ENCODE measurements at regions of chr11 and their contacts with region 1.

Region 1: DNA sequence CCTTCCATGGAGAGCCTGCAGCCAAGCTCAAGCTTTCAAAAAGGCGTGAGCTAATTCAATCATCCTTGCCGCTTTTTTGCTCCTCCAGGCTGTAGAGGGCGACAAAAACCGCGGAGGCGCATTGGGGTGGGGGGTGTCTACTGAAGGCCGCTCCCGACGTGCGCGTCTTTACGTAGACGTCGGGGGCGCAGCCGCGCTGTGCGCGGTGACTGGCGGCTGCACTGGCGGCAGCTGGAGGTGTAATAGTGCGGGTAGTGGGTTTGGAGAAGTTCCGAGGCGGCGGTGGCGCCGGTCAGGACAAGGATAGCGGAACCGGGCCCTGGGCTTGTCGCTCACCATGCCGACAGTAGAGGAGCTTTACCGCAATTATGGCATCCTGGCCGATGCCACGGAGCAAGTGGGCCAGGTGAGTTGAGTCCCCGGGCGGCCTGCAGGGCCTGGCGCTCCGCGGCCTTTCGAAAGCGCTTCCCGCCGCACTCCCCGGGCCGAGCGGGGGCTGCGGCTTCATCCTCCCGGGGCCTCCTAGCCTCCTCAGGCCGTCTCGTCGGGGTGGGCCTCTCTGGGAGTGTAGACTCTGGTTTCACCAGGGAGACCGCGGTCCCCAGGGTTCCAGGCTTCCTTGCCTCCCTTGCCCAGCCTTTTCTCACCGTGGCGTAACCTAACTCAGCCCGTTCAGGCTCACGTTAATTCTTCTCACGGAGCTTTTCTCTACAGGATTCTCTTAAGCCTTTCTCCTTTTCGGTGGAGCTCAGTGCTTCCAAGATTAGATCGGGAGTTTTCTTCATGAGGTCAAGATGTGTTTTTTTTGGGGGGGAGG is at the start of gene API5:
- DNase-seq: peak; percentile 79 to 91
- ATAC-seq: peak; percentile 96 to 98
- H3K4me3 ChIP-seq: peak within 1 kb of the TSS; percentile 82 to 94 (median 92)
- H3K27ac ChIP-seq: peak within 1 kb of the TSS; percentile 85 to 89 (median 88)
- H3K4me1 ChIP-seq: peaks cover 22 to 28% of the 10 kb centered on the region in 2 donors
- H3K27me3 ChIP-seq: no peaks in the 10 kb centered on the region
- CTCF ChIP-seq: peak; percentile 30 to 84 (median 54)
- POLR2A ChIP-seq: peak; percentile 67 to 78
- total RNA-seq, gene API5: 54.0 to 68.5 (median 57.3) TPM

Region 2: DNA sequence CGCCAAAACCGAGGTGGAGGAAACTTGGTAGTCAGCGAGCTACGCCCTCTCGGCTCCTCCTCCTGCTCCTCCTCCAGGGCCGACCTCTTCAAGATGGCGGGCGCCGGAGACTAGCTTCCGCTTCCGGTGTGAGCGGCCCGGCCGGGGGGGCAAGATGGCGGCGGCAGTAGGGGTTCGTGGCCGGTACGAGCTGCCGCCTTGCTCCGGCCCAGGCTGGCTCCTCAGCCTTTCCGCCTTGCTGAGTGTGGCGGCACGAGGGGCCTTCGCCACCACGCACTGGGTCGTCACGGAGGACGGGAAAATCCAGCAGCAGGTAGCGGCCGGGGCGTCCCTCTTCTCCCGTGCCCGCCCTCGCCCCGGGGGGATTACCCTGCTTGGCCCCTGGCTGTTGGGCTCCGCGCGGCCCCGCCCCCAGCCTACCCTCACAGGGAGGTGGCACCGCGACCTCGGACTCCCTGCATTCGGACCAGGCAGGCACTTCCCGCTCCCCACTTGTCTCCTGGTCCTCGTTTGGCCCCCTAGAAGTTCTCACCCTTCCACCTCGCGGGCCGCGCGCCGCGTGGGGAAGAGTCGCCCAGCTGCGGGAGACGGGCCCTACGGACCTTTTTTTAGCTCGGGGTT is 46.9 kb after region 1 on chr11 and contains the start of gene TTC17:
- in situ Hi-C with region 1: no loop called
- intact Hi-C with region 1: loop called (anchors 2 kb)
- DNase-seq: peak; percentile 90 to 91
- ATAC-seq: peak; percentile 97 to 98
- H3K4me3 ChIP-seq: peak within 1 kb of the TSS; percentile 71 to 98 (median 92)
- H3K27ac ChIP-seq: peak within 1 kb of the TSS; percentile 82 to 91 (median 89)
- H3K4me1 ChIP-seq: peaks cover 19 to 25% of the 10 kb centered on the region in 2 donors
- H3K27me3 ChIP-seq: no peaks in the 10 kb centered on the region
- CTCF ChIP-seq: no peak
- POLR2A ChIP-seq: peak; percentile 82 to 87
- total RNA-seq, gene TTC17: 31.6 to 69.0 (median 37.5) TPM

Region 3: GRCh38 chr11:43694477-43694876 is 382.5 kb after region 1 on chr11:
- in situ Hi-C with region 1: no loop called
- intact Hi-C with region 1: no loop called
- DNase-seq: no peak
- ATAC-seq: no peak
- H3K4me3 ChIP-seq: no peak overlapping the region
- H3K27ac ChIP-seq: no peak overlapping the region
- H3K4me1 ChIP-seq: peaks cover 0 to 6% of the 10 kb centered on the region in 2 donors
- H3K27me3 ChIP-seq: no peaks in the 10 kb centered on the region
- CTCF ChIP-seq: no peak
- POLR2A ChIP-seq: no peak

Measured in gastrocnemius medialis (tissue), 4 donors.